ENCODE measurements at regions of chr18 and their contacts with region 1.

Region 1: DNA sequence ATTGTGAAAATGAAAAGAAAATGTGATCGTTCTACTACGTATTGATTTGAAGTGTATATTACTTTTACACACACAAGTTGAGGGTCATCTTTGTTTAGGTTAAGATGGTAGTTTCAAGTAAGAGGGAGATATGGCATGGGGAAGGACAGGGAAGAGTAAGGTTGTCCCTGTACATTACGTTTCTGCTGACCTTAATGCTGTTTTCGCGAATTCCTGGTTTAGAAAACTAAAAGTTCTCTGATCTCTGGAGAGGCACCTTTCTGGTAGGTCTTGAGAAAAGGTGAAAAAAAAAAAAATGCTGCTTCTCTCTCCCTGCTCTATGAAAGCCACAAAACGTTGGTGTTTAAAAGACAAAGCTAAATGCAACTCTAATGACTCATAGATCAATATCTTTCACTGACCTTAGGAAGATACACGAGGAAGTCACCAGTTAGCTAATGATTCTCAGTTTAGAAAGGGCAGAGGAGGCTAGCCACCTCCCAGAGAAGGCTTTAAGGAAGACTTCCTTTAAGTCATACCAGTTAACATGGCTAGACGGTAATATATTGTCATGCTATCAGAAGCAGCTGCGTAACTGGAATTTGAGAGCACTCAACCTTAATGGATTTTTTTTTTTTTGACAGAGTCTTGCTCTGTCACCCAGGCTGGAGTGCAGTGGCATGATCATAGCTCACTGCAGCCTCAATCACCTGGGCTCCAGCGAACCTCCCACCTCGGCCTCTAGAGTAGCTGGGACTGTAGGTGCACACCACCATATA is 13.2 kb downstream of the TXNDC2 start:
- DNase-seq: peak; percentile 56 to 99
- H3K4me3 ChIP-seq: no peak overlapping the region
- H3K27ac ChIP-seq: peak overlapping the region; percentile 73
- H3K4me1 ChIP-seq: peaks cover 25% of the 10 kb centered on the region
- H3K27me3 ChIP-seq: no peaks in the 10 kb centered on the region
- CTCF ChIP-seq: no peak

Region 2: GRCh38 chr18:9743200-9744016 is 155.6 kb before region 1 on chr18:
- CTCF ChIA-PET with region 1: no interaction called
- POLR2A ChIA-PET with region 1: no interaction called
- intact Hi-C with region 1: loop called (anchors 5 kb)
- DNase-seq: peak; percentile 94 to 96
- H3K4me3 ChIP-seq: peak overlapping the region; percentile 27
- H3K27ac ChIP-seq: peak overlapping the region; percentile 96
- H3K4me1 ChIP-seq: peaks cover 59% of the 10 kb centered on the region
- H3K27me3 ChIP-seq: no peaks in the 10 kb centered on the region
- CTCF ChIP-seq: no peak

Region 3: DNA sequence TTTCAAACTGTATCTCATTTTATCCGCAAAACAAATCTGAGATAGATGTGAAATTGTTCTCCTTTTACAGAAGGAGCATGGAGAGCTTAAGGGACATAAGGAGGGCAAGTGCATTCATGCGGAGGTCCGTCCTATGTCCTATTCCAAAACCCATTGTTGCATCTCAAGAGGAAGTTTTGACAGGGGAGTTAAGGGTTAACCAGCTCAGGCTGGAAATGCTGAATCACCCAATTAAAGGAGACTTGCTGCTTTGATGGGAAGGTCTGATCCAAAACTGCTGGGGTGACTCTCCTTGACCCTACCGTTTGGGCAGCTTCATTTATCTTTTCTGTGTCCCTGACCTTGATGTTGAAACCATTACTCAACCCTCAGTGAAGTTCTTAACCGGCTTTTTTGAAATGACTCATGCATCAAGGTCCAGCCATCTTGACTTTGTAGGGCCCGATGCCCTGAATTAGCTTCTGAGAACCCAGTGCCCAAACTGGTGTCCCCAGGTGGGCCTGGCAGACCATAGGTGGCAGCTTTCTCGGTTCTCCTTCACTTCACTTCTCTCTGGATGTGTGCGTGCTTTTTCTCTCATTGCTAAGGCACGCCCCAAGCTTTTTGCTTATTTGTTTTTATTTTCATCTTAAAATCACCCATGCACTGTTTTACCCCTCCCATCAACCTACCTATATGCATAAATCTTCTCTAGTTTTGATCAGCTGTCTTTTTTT is 29.1 kb before region 1 on chr18:
- CTCF ChIA-PET with region 1: no interaction called
- POLR2A ChIA-PET with region 1: interaction called, 14 read pairs
- intact Hi-C with region 1: loop called (anchors 1 kb)
- DNase-seq: peak; percentile 40 to 84
- H3K4me3 ChIP-seq: no peak overlapping the region; the same call in 1 of the 2 replicates
- H3K27ac ChIP-seq: peak overlapping the region; percentile 93
- H3K4me1 ChIP-seq: peaks cover 50% of the 10 kb centered on the region
- H3K27me3 ChIP-seq: no peaks in the 10 kb centered on the region
- CTCF ChIP-seq: no peak

Region 4: DNA sequence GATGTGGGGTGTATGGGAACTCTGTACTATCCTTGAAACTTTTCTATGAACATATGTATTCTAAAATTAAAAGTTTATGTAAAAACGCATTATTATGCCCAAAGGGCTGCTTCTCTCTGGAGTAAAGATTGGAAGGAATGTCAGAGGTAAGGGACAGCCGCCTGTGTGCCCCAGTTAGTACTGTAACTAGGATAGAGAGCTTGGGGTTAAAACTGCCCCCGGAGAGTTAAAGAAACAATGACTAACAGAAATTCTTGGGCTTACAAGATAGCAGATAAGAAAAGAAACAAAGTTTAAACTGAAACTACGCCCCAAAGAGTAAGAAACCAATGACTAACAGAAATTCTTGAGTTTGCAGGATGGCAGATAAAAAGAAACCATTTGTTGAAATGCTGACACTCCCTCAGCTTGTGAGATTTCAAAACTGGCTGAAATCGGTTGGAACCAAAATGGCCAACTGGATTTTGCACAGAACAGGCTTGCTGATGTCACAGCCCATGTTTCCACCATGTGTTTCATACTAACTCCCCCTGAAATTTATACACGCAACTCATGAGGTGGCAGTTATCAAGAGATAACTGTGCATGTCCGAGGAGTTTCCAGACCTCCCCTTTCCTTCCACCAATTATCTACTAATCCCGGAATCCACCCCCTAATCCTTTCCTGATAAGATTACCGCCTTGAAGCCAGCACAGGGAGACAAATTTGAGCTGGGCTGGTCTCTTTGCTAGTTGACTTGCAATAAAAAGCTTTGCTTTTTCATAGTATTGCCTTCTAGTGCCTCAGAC is 21.9 kb before region 1 on chr18:
- CTCF ChIA-PET with region 1: no interaction called
- POLR2A ChIA-PET with region 1: interaction called, 33 read pairs
- intact Hi-C with region 1: loop called (anchors 1 kb)
- DNase-seq: peak; percentile 57 to 96
- H3K4me3 ChIP-seq: peak overlapping the region; percentile 52
- H3K27ac ChIP-seq: peak overlapping the region; percentile 97
- H3K4me1 ChIP-seq: peaks cover 34% of the 10 kb centered on the region
- H3K27me3 ChIP-seq: no peaks in the 10 kb centered on the region
- CTCF ChIP-seq: no peak

Measured in PC-9 (cell line).